Prostate gland (tissue), 2 donors: ENCODE measurements at regions of chr5 and their contacts with region 1.

Region 1: GRCh38 chr5:133423618-133424282 is 188.6 kb downstream of the FSTL4 start:
- DNase-seq: peak; percentile 17
- H3K4me3 ChIP-seq: no peak overlapping the region
- H3K27ac ChIP-seq: peak overlapping the region in 1 of 2 donors; percentile 35
- H3K4me1 ChIP-seq: no peaks in the 10 kb centered on the region
- H3K27me3 ChIP-seq: no peaks in the 10 kb centered on the region
- CTCF ChIP-seq: peak; percentile 79 to 87 (median 84)
- POLR2A ChIP-seq: no peak

Region 2: DNA sequence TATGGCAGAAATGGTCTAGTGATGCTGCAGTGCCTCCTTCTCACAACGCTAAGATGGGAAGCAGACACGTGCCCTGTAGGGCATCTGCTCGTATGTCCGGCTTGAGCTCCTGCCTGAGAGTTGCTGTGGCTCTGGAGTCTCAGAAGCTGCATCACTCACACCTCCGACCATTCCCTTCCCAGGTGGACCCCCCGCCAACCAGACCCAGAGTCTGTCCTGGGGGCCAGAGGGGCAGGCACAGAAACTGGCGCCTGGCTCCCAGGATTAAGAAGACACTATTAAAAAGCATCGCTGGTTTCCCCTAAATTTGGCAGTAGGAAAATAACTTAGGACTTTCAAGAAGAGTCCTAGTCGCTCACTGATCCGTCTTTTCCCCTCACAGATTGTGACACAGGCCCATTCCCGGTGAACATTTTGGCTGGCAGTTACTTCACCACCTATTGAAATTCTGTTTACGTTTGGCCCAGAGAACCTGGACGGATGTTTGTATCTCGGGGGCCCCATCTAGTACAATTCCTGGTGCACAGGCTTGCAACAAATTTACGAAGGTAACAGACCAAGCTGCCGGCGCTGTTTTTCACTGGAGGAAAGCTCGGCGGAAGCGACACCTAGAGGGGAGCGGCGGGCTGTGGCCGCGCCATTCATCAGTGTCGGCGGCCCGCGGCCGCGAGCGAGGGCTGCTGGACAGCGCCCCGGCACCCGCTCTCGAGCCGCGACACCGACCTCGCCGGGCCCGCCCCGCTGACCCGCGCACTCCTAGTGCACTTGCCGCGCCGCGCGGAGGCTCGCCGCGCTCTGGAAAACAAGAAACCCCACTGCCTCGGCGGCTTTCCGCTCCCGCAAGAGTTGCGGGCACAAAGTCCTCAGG is 187.0 kb after region 1 on chr5:
- intact Hi-C with region 1: loop called (anchors 5 kb)
- DNase-seq: peak; percentile 64
- H3K4me3 ChIP-seq: peak overlapping the region; percentile 27 to 37
- H3K27ac ChIP-seq: no peak overlapping the region
- H3K4me1 ChIP-seq: peaks cover 10% of the 10 kb centered on the region
- H3K27me3 ChIP-seq: no peaks in the 10 kb centered on the region
- CTCF ChIP-seq: peak; percentile 40 to 73 (median 64)
- POLR2A ChIP-seq: no peak

Region 3: DNA sequence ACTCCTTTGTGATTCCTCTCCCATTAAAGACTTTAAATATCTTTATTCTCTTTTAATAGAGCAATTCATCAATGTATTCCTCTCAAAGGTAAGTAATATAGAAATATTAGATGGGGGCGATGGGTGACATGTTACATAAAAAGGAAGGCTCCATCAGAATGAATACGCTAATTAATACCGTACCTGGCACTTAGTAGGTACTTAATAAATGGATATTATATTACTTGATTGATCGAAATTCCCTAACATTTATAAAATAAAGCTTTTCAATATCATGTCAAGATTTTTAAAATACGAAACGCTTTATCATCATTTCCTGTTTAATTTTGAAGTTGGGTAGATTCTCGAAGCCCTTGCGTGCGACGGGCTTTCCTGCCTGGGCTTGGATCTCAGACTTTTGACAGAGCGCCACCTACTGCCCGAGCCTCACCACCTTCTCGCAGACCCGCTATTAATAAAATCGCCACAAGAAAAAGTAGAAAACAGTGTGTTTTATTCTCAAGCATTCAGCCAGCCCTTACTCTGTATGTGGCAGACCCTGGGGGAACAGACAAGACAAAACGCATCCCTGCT is 445.3 kb after region 1 on chr5:
- intact Hi-C with region 1: loop called (anchors 5 kb)
- DNase-seq: peak; percentile 61
- H3K4me3 ChIP-seq: no peak overlapping the region
- H3K27ac ChIP-seq: no peak overlapping the region
- H3K4me1 ChIP-seq: peaks cover 3% of the 10 kb centered on the region
- H3K27me3 ChIP-seq: no peaks in the 10 kb centered on the region
- CTCF ChIP-seq: peak; percentile 58 to 74 (median 67)
- POLR2A ChIP-seq: no peak